Activated CD8-positive, alpha-beta T cell treated with anti-CD3 and anti-CD28 coated beads for 36 hours (primary cell): ENCODE measurements at regions of chr10 and their contacts with region 1.

Region 1: GRCh38 chr10:119165171-119166110 is at the start of gene SFXN4:
- DNase-seq: peak; percentile 80
- ATAC-seq: peak; percentile 92
- H3K4me3 Mint-ChIP-seq: peak within 1 kb of the TSS; percentile 79
- H3K27ac Mint-ChIP-seq: peak within 1 kb of the TSS; percentile 95
- H3K4me1 Mint-ChIP-seq: peaks cover 37% of the 10 kb centered on the region
- H3K27me3 Mint-ChIP-seq: no peaks in the 10 kb centered on the region
- CTCF ChIP-seq: no peak
- total RNA-seq, gene SFXN4: 45.9 to 50.3 TPM

Region 2: DNA sequence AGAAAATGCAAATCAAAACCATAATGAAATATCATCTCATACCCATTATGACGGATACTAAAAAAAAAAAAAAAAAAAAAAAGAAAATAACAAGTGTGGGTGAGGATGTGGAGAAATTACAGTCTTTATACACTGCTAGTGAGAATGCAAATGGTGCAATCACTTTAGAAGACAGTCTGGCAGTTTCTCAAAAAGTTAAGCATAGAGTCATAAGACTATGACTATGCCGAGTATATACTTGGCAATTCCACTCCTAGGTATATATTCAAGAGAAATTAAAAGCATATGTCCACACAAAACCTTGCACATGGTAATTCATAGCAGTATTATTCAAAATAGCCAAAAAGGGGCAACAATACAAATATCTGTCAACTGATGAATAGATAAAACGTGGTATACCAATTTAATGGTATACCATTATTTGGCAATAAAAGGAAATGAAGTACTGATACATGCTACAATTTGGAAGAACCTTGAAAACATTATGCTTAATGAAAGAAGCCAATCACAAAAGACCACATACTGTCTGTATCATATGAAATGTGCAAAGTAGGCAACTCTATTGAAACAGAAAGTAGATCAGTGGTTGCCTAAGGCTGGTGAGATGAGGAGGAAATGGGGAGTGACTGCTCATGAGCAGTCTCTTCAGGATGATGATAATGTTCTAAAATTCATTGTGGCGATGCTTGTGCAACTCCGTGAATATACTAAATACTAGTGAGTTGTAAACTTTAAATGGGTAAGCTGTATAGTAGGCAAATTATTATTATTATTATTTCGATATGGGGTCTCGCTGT is 226.0 kb before region 1 on chr10:
- CTCF ChIA-PET with region 1: no interaction called
- POLR2A ChIA-PET with region 1: no interaction called
- intact Hi-C with region 1: no loop called
- DNase-seq: no peak
- ATAC-seq: no peak
- H3K4me3 Mint-ChIP-seq: no peak overlapping the region
- H3K27ac Mint-ChIP-seq: no peak overlapping the region
- H3K4me1 Mint-ChIP-seq: no peaks in the 10 kb centered on the region
- H3K27me3 Mint-ChIP-seq: peaks cover 30% of the 10 kb centered on the region
- CTCF ChIP-seq: no peak

Region 3: GRCh38 chr10:119153651-119154050 is 11.8 kb before region 1 on chr10:
- CTCF ChIA-PET with region 1: interaction called, 3 read pairs
- POLR2A ChIA-PET with region 1: interaction called, 14 read pairs
- intact Hi-C with region 1: no loop called
- DNase-seq: no peak
- ATAC-seq: no peak
- H3K4me3 Mint-ChIP-seq: no peak overlapping the region
- H3K27ac Mint-ChIP-seq: no peak overlapping the region
- H3K4me1 Mint-ChIP-seq: no peaks in the 10 kb centered on the region
- H3K27me3 Mint-ChIP-seq: no peaks in the 10 kb centered on the region
- CTCF ChIP-seq: no peak

Region 4: GRCh38 chr10:119178372-119179119 is 13.1 kb after region 1 on chr10 and contains the start of gene PRDX3:
- CTCF ChIA-PET with region 1: interaction called, 3 read pairs
- POLR2A ChIA-PET with region 1: interaction called, 14 read pairs
- intact Hi-C with region 1: no loop called
- DNase-seq: peak; percentile 97
- ATAC-seq: peak; percentile 98
- H3K4me3 Mint-ChIP-seq: peak within 1 kb of the TSS; percentile 87
- H3K27ac Mint-ChIP-seq: peak within 1 kb of the TSS; percentile 92
- H3K4me1 Mint-ChIP-seq: peaks cover 29% of the 10 kb centered on the region
- H3K27me3 Mint-ChIP-seq: no peaks in the 10 kb centered on the region
- CTCF ChIP-seq: no peak
- total RNA-seq, gene PRDX3: 198 to 203 TPM